H1 (cell line): ENCODE measurements at regions of chrX and their contacts with region 1.

Region 1: DNA sequence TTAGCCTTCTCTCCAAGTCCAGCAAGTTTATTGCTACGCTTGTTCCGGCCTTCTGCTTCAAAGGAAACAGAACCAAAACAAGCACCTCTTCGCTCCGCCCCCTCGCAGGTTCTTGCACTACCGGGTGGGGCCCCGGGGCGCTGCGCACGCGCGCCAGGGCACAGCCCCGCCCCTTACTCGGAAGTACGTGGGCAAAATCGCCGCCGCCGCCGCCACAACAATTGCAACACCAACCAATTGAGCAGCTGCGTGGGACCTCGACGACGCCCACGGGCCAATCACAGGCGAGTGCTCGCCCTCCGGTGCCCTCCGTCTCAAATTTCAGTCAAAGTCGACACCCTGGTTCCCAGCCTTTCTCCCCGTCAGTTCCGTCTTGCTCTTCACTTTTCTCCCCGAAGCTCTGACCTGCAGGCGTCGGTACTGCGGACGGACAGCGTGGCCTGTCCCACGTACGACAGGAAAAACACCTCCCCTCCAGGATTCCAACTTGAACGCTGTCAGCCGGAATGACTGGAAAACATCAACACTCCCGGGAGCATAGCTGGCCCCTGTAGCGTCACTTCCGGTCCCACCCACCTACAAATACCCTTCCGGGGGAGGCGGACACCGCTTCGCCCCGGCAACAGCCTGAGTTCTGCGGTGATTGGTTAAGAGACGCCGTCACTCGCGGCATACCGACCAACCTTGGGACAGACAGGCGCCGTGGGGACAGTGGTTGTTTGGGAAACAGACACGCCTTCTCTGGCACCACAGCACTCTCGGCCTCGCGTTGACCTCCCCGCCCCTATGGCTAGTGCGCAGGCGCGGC is 624 bp upstream of the OTUD5 start:
- DNase-seq: peak; percentile 83 to 88
- H3K4me3 ChIP-seq: peak overlapping the region; percentile 80 to 94 (median 91)
- H3K27ac ChIP-seq: peak overlapping the region; percentile 97
- H3K4me1 ChIP-seq: peaks cover 0 to 7% (median 2%) of the 10 kb centered on the region in 4 experiments; a peak in 4 of 7 replicates
- H3K27me3 ChIP-seq: no peaks in the 10 kb centered on the region
- CTCF ChIP-seq: no peak
- EP300 ChIP-seq: no peak
- POLR2A ChIP-seq: peak in 1 of 2 experiments; percentile 65; a peak in 2 of 3 replicates
- RAD21 ChIP-seq: no peak

Region 2: DNA sequence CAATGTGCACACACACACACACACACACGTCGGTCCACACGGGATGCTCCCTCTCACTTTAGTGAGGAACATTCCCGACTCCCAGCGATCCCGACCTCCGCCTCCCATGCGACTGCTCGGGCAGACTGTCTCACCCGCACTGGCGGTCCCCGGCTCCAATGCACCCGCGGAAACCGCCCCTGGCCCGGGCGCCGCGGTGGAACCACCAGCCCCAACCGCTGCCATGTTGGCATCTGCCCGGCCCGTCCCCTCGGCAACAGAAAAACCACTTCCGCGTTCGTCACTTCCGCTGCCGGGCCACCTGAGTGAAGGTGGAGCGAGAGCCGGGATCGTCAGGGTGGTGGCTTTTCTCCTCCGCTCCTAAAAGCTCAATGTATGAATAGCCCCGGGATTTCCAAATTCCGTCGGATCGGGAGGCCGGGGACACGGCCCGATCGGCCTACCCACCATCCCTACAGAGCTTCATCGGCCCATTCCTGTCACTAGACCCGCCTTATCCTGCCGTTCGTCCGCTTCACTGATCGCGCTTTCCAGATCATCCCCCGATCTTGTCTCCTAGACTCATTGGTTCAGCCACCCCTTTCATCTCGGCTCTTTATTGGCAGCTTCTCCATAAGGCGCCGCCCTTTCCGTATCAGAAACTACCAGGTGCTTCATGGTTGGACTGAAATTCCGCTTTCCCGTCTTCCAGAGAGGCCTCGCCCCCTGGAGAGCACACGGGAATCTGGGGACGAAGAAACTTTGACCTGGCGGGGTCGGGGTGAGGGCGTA is 46.4 kb before region 1 on chrX and contains the start of gene SLC35A2:
- CTCF ChIA-PET with region 1: no interaction called
- POLR2A ChIA-PET with region 1: interaction called, 13 read pairs
- DNase-seq: peak in 1 of 2 experiments; percentile 85
- H3K4me3 ChIP-seq: peak within 1 kb of the TSS; percentile 62 to 94 (median 80)
- H3K27ac ChIP-seq: peak within 1 kb of the TSS; percentile 75; the same call in 1 of the 2 replicates
- H3K4me1 ChIP-seq: peaks cover 0 to 4% (median 3%) of the 10 kb centered on the region in 4 experiments; a peak in 5 of 7 replicates
- H3K27me3 ChIP-seq: no peaks in the 10 kb centered on the region
- CTCF ChIP-seq: no peak
- EP300 ChIP-seq: no peak
- POLR2A ChIP-seq: no peak
- RAD21 ChIP-seq: no peak
- total RNA-seq, gene SLC35A2: 20.4 and 21.4 TPM in 2 replicates

Region 3: DNA sequence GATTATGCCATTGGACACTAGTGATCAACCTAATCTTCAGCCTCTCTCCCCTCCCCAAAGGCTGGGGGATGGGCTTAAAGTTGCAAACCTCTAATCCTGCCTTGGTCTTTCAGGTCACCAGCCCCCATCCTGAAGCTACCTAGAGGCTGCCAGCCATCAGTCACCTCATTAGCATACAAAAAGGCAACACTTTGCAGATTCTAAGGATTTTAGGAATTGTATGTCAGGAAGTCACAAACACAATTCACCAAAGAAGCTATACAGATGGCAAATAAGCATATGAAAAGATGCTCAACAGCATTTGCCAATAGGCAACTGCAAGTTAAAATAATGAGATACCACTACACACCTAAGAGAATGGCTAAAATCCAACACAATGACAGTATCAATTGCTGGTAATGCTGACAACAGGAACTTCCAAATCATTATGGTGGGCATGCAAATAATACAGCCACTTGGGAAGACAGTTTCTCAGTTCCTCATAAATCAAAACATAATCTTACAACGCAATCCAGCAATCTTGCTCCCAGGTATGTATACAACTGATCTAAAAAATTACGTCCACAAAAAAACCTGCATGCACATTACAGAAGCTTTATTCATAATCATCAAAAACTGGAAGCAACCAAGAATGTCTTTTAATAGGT is 30.2 kb before region 1 on chrX:
- CTCF ChIA-PET with region 1: no interaction called
- POLR2A ChIA-PET with region 1: interaction called, 25 read pairs
- DNase-seq: no peak
- H3K4me3 ChIP-seq: peak overlapping the region; percentile 2 to 54 (median 14); a peak in 5 of 8 replicates
- H3K27ac ChIP-seq: peak overlapping the region; percentile 75
- H3K4me1 ChIP-seq: peaks cover 0 to 18% (median 8%) of the 10 kb centered on the region in 4 experiments; a peak in 5 of 7 replicates
- H3K27me3 ChIP-seq: no peaks in the 10 kb centered on the region
- CTCF ChIP-seq: no peak
- EP300 ChIP-seq: peak in 1 of 2 experiments; percentile 7; a peak in 1 of 3 replicates
- POLR2A ChIP-seq: no peak
- RAD21 ChIP-seq: no peak

Region 4: GRCh38 chrX:48945516-48946348 is 12.3 kb before region 1 on chrX:
- CTCF ChIA-PET with region 1: interaction called, 4 read pairs
- POLR2A ChIA-PET with region 1: interaction called, 15 read pairs
- DNase-seq: peak in 1 of 2 experiments; percentile 47
- H3K4me3 ChIP-seq: no peak overlapping the region
- H3K27ac ChIP-seq: no peak overlapping the region
- H3K4me1 ChIP-seq: 0 out of 7 replicates have a peak, but pooled peaks cover 0 to 2% (median 0%) of the 10 kb centered on the region in 4 experiments
- H3K27me3 ChIP-seq: no peaks in the 10 kb centered on the region
- CTCF ChIP-seq: peak; percentile 69 to 81 (median 78)
- EP300 ChIP-seq: no peak
- POLR2A ChIP-seq: no peak
- RAD21 ChIP-seq: peak; percentile 69 to 81

Region 5: GRCh38 chrX:48972220-48973167 is 14.5 kb after region 1 on chrX:
- CTCF ChIA-PET with region 1: interaction called, 15 read pairs
- POLR2A ChIA-PET with region 1: interaction called, 70 read pairs
- DNase-seq: peak in 1 of 2 experiments; percentile 54
- H3K4me3 ChIP-seq: peak overlapping the region; percentile 39 to 70 (median 50)
- H3K27ac ChIP-seq: no peak overlapping the region; the same call in 1 of the 2 replicates
- H3K4me1 ChIP-seq: peaks cover 0 to 3% (median 0%) of the 10 kb centered on the region in 4 experiments; a peak in 1 of 7 replicates
- H3K27me3 ChIP-seq: no peaks in the 10 kb centered on the region
- CTCF ChIP-seq: peak in 2 of 3 experiments; percentile 39 to 70; a peak in 3 of 4 replicates
- EP300 ChIP-seq: no peak
- POLR2A ChIP-seq: peak in 1 of 2 experiments; percentile 59; a peak in 2 of 3 replicates
- RAD21 ChIP-seq: peak in 1 of 2 experiments; percentile 22; a peak in 1 of 4 replicates